IMR-90 (cell line): ENCODE measurements at regions of chr1 and their contacts with region 1.

Region 1: DNA sequence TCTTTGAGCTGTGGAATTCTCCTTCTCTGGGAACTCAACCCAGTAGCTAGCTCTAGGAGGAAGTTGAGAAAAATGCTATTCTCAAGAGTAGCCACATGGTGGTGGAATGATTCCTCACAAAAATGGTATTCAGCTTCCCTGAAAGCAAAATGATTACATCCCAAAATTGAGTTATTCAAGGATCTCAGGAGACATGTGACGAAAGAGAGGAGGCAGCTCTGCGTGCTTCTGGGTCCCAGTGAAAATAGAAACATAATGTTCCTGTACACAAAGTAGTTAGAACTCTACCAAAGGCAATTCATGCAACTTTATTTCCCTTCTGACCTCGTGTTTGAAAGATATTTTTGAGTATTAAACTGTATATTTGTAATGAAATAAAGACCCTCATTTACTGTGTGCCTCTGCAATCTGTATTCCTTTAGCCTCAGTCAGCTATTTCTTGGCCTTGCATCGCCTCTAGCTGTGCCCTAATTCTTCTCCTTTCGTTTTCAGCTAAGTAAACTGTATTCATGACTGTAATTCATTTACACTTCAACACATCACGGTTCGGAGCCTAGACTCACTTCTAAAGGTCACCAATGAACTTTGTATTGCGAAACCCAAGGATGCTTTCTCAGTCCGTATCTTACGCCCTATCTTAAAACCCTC is 167.3 kb downstream of the FASLG start:
- DNase-seq: peak; percentile 95
- ATAC-seq: peak; percentile 82
- H3K4me3 ChIP-seq: no peak overlapping the region
- H3K27ac ChIP-seq: peak overlapping the region; percentile 76
- H3K4me1 ChIP-seq: peaks cover 11% of the 10 kb centered on the region
- H3K27me3 ChIP-seq: no peaks in the 10 kb centered on the region
- CTCF ChIP-seq: peak; percentile 81
- POLR2A ChIP-seq: peak; percentile 27; the same call in 1 of the 2 replicates
- RAD21 ChIP-seq: peak; percentile 94

Region 2: DNA sequence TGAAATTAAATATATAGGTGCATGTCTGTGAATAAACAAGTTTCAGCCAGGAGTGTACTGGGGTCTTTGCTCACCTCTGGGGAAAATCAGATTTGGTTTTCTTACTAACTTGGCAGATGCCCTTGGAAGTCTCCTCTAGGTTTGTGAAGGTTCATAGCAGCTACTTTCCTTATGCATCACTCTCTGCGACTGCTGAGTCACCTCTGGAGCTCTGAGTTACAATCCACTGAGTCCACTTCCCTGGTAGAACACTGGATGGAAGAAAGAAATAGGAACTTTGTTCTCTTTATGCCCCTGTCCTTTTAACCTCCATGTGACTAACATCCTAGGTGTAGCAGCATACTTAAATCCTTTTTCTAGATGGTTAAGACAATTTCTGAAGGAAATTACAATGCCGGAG is 171.7 kb before region 1 on chr1:
- CTCF ChIA-PET with region 1: no interaction called
- POLR2A ChIA-PET with region 1: no interaction called
- dilution Hi-C with region 1: no loop called
- in situ Hi-C with region 1: no loop called
- intact Hi-C with region 1: no loop called
- DNase-seq: peak; percentile 88
- ATAC-seq: peak; percentile 94
- H3K4me3 ChIP-seq: no peak overlapping the region
- H3K27ac ChIP-seq: no peak overlapping the region
- H3K4me1 ChIP-seq: peaks cover 5% of the 10 kb centered on the region; the same call in 1 of the 2 replicates
- H3K27me3 ChIP-seq: no peaks in the 10 kb centered on the region
- CTCF ChIP-seq: no peak
- POLR2A ChIP-seq: no peak
- RAD21 ChIP-seq: no peak

Region 3: GRCh38 chr1:172906778-172907592 is 80.8 kb after region 1 on chr1:
- CTCF ChIA-PET with region 1: interaction called, 8 read pairs
- POLR2A ChIA-PET with region 1: interaction called, 9 read pairs
- dilution Hi-C with region 1: no loop called
- in situ Hi-C with region 1: no loop called
- intact Hi-C with region 1: loop called (anchors 2 kb)
- DNase-seq: peak; percentile 93
- ATAC-seq: 0 out of 2 replicates have a peak, but pooled peaks have one; percentile 3
- H3K4me3 ChIP-seq: no peak overlapping the region
- H3K27ac ChIP-seq: peak overlapping the region; percentile 67
- H3K4me1 ChIP-seq: peaks cover 23% of the 10 kb centered on the region
- H3K27me3 ChIP-seq: no peaks in the 10 kb centered on the region
- CTCF ChIP-seq: no peak
- POLR2A ChIP-seq: 0 out of 2 replicates have a peak, but pooled peaks have one; percentile 22
- RAD21 ChIP-seq: no peak

Region 4: DNA sequence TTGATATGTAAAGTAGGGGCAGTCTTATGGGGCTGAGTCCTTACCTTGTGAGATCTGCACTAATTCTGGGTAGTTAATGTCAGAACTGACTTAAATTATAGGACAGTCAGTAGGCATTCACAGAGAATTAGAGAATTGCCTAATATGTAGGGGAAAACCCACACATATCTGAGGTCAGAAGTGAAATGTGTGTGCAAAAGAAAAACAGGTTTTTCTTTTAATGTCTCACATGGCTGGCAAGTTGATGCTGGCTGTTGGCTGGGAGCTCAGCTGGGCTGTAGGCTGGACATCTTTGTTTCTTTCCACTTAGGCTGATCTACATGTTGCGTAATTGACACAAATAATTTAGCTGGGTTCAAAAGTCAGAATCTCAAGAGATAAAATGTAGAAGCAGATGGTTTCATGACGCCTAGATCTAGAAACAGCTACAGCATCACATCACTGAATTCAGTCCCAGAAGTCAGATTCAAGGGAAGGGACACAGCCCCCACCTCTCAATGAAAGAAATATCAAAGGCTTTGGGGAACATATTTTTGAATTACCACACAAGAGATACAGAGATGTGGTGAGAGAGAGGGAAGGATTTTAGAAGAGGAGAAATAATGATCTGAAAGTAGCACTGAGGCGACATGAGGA is 125.6 kb after region 1 on chr1:
- CTCF ChIA-PET with region 1: interaction called, 4 read pairs
- POLR2A ChIA-PET with region 1: no interaction called
- dilution Hi-C with region 1: no loop called
- in situ Hi-C with region 1: no loop called
- intact Hi-C with region 1: loop called (anchors 5 kb)
- DNase-seq: peak; percentile 91
- ATAC-seq: peak; percentile 19
- H3K4me3 ChIP-seq: no peak overlapping the region
- H3K27ac ChIP-seq: peak overlapping the region; percentile 81; the same call in 1 of the 2 replicates
- H3K4me1 ChIP-seq: peaks cover 32% of the 10 kb centered on the region
- H3K27me3 ChIP-seq: no peaks in the 10 kb centered on the region
- CTCF ChIP-seq: no peak
- POLR2A ChIP-seq: no peak
- RAD21 ChIP-seq: no peak

Region 5: GRCh38 chr1:173062156-173062938 is 236.1 kb after region 1 on chr1:
- CTCF ChIA-PET with region 1: no interaction called
- POLR2A ChIA-PET with region 1: no interaction called
- dilution Hi-C with region 1: no loop called
- in situ Hi-C with region 1: no loop called
- intact Hi-C with region 1: loop called (anchors 1 kb)
- DNase-seq: peak; percentile 80
- ATAC-seq: peak; percentile 80
- H3K4me3 ChIP-seq: no peak overlapping the region
- H3K27ac ChIP-seq: no peak overlapping the region
- H3K4me1 ChIP-seq: peaks cover 8% of the 10 kb centered on the region; the same call in 1 of the 2 replicates
- H3K27me3 ChIP-seq: no peaks in the 10 kb centered on the region
- CTCF ChIP-seq: no peak
- POLR2A ChIP-seq: no peak
- RAD21 ChIP-seq: no peak

Region 6: GRCh38 chr1:173195596-173196088 is 369.4 kb after region 1 on chr1:
- CTCF ChIA-PET with region 1: interaction called, 4 read pairs
- POLR2A ChIA-PET with region 1: interaction called, 22 read pairs
- dilution Hi-C with region 1: no loop called
- in situ Hi-C with region 1: no loop called
- intact Hi-C with region 1: no loop called
- DNase-seq: no peak
- ATAC-seq: no peak
- H3K4me3 ChIP-seq: no peak overlapping the region
- H3K27ac ChIP-seq: no peak overlapping the region
- H3K4me1 ChIP-seq: peaks cover 3% of the 10 kb centered on the region
- H3K27me3 ChIP-seq: no peaks in the 10 kb centered on the region
- CTCF ChIP-seq: no peak
- POLR2A ChIP-seq: no peak
- RAD21 ChIP-seq: no peak

Region 7: DNA sequence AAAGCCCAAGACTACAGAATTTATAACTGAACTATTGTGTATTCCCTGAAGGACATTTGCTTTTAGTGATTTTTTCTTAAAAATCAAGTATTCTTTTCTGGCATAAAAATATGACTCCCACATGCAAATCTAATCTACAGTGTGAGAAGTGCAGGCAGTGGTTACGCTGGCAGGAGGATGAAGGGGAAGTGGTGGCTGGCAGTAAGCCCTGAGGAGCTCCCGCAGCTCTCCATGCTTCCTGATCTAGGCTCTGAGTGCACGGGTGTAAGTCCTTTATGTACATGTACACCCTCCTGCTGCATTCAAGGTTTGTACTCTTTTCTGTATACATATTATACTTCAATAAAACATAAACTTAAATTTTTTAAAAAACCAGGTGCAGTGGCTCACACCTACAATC is 583.4 kb after region 1 on chr1:
- CTCF ChIA-PET with region 1: interaction called, 3 read pairs
- POLR2A ChIA-PET with region 1: no interaction called
- dilution Hi-C with region 1: no loop called
- in situ Hi-C with region 1: loop called (anchors 10 kb)
- intact Hi-C with region 1: no loop called
- DNase-seq: peak; percentile 76
- ATAC-seq: 0 out of 2 replicates have a peak, but pooled peaks have one; percentile 15
- H3K4me3 ChIP-seq: no peak overlapping the region
- H3K27ac ChIP-seq: no peak overlapping the region
- H3K4me1 ChIP-seq: peaks cover 10% of the 10 kb centered on the region
- H3K27me3 ChIP-seq: no peaks in the 10 kb centered on the region
- CTCF ChIP-seq: no peak
- POLR2A ChIP-seq: no peak
- RAD21 ChIP-seq: no peak